Heart right ventricle (tissue), 16 donors: ENCODE measurements at regions of chr20 and their contacts with region 1.

Region 1: GRCh38 chr20:47493175-47493962 is 8.3 kb upstream of the NCOA3 start:
- DNase-seq: peak; percentile 87 to 91
- ATAC-seq: peak; percentile 93 to 96 (median 96)
- H3K4me3 ChIP-seq: peak overlapping the region in 4 of 10 donors; percentile 1 to 25 (median 10)
- H3K27ac ChIP-seq: peak overlapping the region; percentile 73 to 90 (median 80)
- H3K4me1 ChIP-seq: peaks cover 10 to 45% (median 30%) of the 10 kb centered on the region in 9 donors
- H3K27me3 ChIP-seq: no peaks in the 10 kb centered on the region
- CTCF ChIP-seq: no peak

Region 2: GRCh38 chr20:47196091-47197081 is 297.0 kb before region 1 on chr20:
- intact Hi-C with region 1: loop called in 1 of 10 experiments (anchors 10 kb)
- DNase-seq: peak; percentile 66 to 73
- ATAC-seq: peak; percentile 63 to 89 (median 82)
- H3K4me3 ChIP-seq: peak overlapping the region in 1 of 10 donors; percentile 15
- H3K27ac ChIP-seq: no peak overlapping the region
- H3K4me1 ChIP-seq: peaks cover 0 to 16% (median 12%) of the 10 kb centered on the region in 9 donors
- H3K27me3 ChIP-seq: no peaks in the 10 kb centered on the region
- CTCF ChIP-seq: peak; percentile 92 to 98 (median 94)

Region 3: DNA sequence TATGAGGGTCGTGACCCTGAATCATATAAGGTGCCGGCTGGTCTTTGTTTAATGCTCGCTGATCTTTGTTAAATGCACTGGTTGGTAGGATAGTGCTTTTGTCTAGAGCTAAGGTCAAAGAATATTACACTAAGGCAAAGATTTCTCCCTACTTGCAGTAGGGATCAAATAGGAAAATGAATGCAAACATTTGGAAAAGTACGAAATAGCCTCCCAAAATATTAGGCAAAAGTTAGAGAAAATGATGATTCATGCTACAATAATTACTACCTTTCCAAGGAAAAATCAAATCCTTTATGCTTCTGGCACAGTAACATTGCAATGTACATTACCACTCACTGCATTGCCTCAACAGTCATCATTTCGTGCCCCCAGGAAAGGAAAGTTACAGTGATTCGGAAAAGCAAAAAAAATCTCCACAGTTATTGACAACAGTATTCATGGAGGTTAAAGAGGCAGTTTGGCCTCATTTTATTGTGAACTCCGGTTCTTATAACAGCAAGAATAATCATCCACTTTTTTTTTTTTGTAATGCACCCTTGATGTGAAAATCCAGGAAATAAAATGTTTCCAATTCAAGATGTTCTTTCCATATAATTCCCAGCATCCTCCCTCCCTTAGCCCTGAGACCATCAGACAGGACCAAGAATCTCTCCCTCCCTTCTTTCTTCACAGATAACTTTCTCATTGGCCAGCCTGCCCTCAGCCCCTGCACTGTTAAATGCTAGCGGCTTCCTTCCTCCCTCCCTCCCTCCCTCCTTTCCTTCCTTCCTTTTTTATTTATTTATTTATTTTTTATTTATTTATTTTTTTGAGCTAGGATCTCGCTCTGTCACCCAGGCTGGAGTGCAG is 75.1 kb before region 1 on chr20:
- intact Hi-C with region 1: loop called in 1 of 10 experiments (anchors 5 kb)
- DNase-seq: no peak
- ATAC-seq: no peak
- H3K4me3 ChIP-seq: no peak overlapping the region
- H3K27ac ChIP-seq: peak overlapping the region in 1 of 10 donors; percentile 7
- H3K4me1 ChIP-seq: peaks cover 0 to 43% (median 16%) of the 10 kb centered on the region in 9 donors
- H3K27me3 ChIP-seq: no peaks in the 10 kb centered on the region
- CTCF ChIP-seq: no peak

Region 4: DNA sequence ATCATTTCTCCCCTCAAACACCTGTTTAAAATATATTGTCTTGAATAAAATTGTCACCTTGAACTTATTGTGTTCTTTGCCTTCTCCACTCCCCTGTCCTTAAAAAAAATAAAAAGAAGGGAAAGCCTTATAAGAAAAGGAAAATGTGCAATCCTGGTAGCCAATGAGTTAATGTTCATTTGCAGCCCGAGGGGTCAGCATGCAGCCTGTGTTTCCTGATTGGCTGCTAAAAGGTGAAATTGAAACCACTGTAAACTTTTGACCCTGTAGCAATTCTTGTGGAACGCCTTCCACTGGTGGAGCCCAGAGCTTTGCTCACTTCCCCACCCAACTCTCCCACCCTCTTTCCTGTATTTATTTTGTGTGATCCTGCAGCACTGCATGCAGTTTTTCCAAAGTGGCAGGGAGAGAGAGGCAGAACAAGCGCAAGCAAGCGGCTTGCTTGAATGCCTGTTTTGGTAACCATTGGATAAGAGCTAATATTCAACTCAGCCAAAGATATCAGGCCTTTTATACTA is 83.2 kb after region 1 on chr20:
- intact Hi-C with region 1: loop called in 1 of 10 experiments (anchors 10 kb)
- DNase-seq: peak; percentile 39 to 83
- ATAC-seq: peak; percentile 88 to 97 (median 96)
- H3K4me3 ChIP-seq: peak overlapping the region in 7 of 10 donors; percentile 7 to 40 (median 34)
- H3K27ac ChIP-seq: peak overlapping the region in 9 of 10 donors; percentile 23 to 78 (median 51)
- H3K4me1 ChIP-seq: peaks cover 13 to 90% (median 71%) of the 10 kb centered on the region in 9 donors
- H3K27me3 ChIP-seq: no peaks in the 10 kb centered on the region
- CTCF ChIP-seq: peak in 1 of 9 donors; percentile 14

Region 5: DNA sequence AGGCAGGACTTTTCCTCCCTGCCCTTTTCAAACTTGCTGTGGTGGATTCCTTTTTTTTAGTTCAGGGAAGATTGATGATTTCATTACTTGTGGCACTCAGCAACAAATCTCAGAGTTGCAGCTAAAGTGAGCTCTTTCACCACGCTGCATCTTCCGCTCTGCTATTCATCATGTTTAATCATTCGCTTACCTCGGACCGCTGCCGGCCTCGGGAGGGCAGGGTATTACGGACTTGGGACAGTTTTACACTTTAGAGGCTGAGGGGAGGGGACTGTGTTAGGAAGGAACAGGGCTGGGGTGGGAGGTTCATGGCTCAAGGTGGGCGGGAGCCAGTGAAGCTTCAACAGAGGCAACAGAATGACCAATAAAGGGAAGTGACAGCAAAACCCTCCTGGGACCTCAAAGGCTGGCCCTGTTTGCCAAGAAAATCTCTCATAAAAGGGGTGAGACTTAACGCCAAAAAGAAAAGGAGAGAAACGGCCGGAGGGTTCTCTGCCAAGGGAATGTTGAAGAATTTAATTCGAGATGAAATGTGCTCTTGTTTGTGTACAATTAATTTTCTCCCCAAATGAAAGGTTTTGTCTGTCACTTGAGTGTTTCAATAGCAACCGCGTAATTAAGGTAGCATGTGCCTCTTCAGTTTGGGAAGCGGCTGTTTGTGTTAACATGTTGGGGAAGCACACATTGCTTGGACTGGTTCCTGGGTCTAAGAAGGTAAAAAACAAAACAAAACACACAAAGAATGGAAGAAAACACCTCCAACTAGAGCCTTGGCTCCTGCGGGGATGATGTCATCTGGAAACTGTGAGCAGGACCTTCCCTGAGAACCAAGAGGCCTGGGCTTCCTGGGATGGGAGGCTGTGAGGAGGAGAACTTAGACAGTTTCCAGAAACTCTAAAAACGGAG is 364.4 kb after region 1 on chr20:
- intact Hi-C with region 1: no loop called
- DNase-seq: peak; percentile 23 to 62
- ATAC-seq: peak; percentile 49 to 92 (median 78)
- H3K4me3 ChIP-seq: peak overlapping the region in 1 of 10 donors; percentile 0
- H3K27ac ChIP-seq: peak overlapping the region in 8 of 10 donors; percentile 14 to 79 (median 58)
- H3K4me1 ChIP-seq: peaks cover 0 to 25% (median 9%) of the 10 kb centered on the region in 9 donors
- H3K27me3 ChIP-seq: peaks cover 0 to 6% (median 0%) of the 10 kb centered on the region in 7 donors
- CTCF ChIP-seq: no peak